Panc1 (cell line): ENCODE measurements at regions of chr1 and their contacts with region 1.

Region 1: GRCh38 chr1:37807555-37808368 is at the starts of genes C1orf122 and YRDC:
- DNase-seq: peak; percentile 33
- ATAC-seq: peak; percentile 94
- H3K4me3 ChIP-seq: peak within 1 kb of the TSS; percentile 94 to 98
- H3K27ac ChIP-seq: peak within 1 kb of the TSS; percentile 94
- H3K4me1 ChIP-seq: peaks cover 32% of the 10 kb centered on the region
- H3K27me3 ChIP-seq: no peaks in the 10 kb centered on the region
- CTCF ChIP-seq: no peak
- total RNA-seq, gene C1orf122: 77.2 TPM
- total RNA-seq, gene YRDC: 24.0 TPM

Region 2: GRCh38 chr1:36796106-36796590 is 1011.6 kb before region 1 on chr1:
- CTCF ChIA-PET with region 1: no interaction called
- POLR2A ChIA-PET with region 1: no interaction called
- in situ Hi-C with region 1: no loop called
- intact Hi-C with region 1: no loop called
- DNase-seq: no peak
- ATAC-seq: no peak
- H3K4me3 ChIP-seq: no peak overlapping the region
- H3K27ac ChIP-seq: no peak overlapping the region
- H3K4me1 ChIP-seq: no peaks in the 10 kb centered on the region
- H3K27me3 ChIP-seq: peaks cover 10% of the 10 kb centered on the region; the same call in 1 of the 2 replicates
- CTCF ChIP-seq: no peak

Region 3: DNA sequence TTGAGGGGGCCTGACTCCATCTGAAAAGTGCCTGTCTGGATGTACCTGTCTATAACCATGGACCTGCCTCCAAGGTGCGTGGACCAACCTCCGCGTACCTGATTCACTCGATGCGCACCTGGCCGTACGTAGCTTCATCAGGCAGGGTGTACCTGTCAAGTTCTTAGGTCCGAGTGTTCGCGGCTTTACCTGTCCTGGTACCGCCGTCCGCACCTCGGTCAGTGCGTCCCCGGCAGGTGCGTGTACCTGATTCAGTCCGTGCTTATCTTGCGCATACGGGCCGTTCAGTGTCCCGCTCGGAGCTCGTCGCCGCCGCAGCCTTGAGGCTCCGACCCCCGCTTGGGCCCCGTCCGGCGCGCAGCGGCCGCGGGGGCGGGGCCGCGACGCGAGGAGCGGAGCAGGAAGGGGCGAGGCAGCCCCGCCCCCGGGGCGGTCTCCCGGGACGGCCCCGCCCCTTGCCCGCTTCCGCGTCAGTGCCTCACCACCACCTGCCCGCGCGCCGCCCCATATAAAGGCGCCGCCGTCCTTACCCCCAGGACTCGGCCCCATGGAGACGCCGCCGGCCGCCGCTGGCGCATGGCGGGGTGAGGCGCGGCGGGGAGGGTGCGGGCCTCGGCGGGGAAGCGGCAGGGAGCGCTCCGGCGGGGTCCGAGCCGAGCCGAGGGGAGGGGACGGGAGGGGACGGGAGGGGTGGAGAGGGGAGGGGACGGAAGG is 333.6 kb before region 1 on chr1 and contains the start of gene ZC3H12A:
- CTCF ChIA-PET with region 1: no interaction called
- POLR2A ChIA-PET with region 1: interaction called, 10 read pairs
- in situ Hi-C with region 1: no loop called
- intact Hi-C with region 1: no loop called
- DNase-seq: no peak
- ATAC-seq: peak; percentile 74
- H3K4me3 ChIP-seq: peak within 1 kb of the TSS; percentile 74 to 78
- H3K27ac ChIP-seq: peak within 1 kb of the TSS; percentile 89
- H3K4me1 ChIP-seq: peaks cover 67% of the 10 kb centered on the region
- H3K27me3 ChIP-seq: no peaks in the 10 kb centered on the region
- CTCF ChIP-seq: no peak
- total RNA-seq, gene ZC3H12A: 9.4 TPM

Region 4: DNA sequence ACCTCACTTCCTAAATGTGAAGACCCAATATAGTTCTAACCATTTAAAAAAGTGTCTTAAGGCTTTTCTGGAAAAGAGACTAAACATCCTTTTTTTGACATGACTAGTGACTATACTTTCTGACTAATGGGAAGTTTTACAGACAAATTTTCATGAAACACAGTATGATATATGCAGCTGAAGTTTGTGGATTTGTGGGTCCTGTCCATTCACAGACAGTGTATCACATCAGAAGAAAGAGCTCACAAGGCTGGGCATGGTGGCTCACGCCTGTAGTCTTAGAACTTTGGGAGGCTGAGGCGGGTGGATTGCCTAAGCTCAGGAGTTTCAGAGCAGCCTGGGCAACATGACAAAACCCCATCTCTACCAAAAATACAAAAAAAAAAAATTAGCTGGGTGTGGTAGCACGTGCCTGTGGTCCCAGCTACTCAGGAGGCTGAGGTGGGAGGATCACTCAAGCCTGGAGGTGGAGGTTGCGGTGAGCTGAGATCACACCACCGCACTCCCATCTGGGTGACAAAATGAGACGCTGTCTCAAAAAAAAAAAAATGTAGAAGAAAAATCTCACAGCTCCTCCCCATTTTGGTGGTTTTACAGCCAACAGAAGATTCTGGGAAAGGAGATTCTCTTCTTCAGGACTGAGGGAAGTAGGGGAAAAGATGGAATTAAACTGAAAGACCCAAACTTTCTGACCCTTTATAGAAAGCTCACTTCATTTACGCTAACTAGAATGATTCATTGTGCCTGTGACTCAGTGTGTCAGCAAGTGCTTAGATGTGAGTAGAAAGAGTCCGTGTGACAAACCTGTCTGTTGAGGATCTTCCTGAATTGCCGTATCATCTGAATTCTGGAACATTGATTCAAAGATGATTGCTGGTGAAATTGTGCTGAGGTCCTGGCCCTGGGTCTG is 15.4 kb after region 1 on chr1:
- CTCF ChIA-PET with region 1: no interaction called
- POLR2A ChIA-PET with region 1: no interaction called
- in situ Hi-C with region 1: no loop called
- intact Hi-C with region 1: no loop called
- DNase-seq: no peak
- ATAC-seq: no peak
- H3K4me3 ChIP-seq: no peak overlapping the region
- H3K27ac ChIP-seq: no peak overlapping the region
- H3K4me1 ChIP-seq: no peaks in the 10 kb centered on the region
- H3K27me3 ChIP-seq: no peaks in the 10 kb centered on the region
- CTCF ChIP-seq: no peak

Region 5: DNA sequence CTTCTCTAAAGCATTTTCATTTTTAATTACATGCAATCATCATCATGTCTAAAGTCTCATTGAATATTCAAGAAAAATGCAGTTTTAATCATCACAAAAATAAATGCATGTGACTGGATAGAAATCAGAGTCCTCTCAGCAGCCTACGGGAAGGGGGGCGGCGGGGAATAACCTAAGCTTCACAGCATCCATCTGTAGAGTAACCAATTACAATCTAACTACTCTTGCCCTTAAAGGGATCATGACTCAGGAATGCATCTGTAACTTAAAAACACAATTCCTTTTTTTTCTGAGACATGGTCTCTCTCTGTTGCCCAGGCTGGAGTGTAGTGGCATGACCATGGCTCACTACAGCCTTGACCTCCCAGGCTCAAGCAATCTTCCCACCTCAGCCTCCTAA is 29.0 kb after region 1 on chr1:
- CTCF ChIA-PET with region 1: no interaction called
- POLR2A ChIA-PET with region 1: interaction called, 14 read pairs
- in situ Hi-C with region 1: no loop called
- intact Hi-C with region 1: no loop called
- DNase-seq: no peak
- ATAC-seq: no peak
- H3K4me3 ChIP-seq: no peak overlapping the region
- H3K27ac ChIP-seq: no peak overlapping the region
- H3K4me1 ChIP-seq: no peaks in the 10 kb centered on the region
- H3K27me3 ChIP-seq: no peaks in the 10 kb centered on the region
- CTCF ChIP-seq: no peak